ENCODE measurements at regions of chr6 and their contacts with region 1.

Region 1: DNA sequence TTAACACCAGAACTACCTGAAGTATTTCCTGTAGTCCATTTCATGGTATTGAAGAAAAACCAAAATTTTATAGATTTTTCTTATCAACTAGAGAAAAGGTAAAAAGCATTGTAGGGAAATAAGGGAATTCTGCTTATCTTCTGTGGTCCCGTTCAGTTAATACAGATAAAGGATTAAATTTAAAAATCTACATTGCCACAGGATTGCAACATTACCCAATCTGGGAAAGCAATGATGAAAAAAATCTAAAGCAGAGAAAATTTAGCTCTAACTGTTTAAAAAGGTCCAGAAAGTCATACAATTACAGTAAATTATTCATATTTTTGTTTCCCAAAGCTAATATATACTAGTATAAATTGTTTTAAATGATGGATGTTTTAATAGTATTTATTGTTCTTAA is 18.0 kb downstream of the POLH start:
- DNase-seq: no peak
- ATAC-seq: no peak
- H3K4me3 ChIP-seq: no peak overlapping the region
- H3K27ac ChIP-seq: no peak overlapping the region
- H3K4me1 ChIP-seq: no peaks in the 10 kb centered on the region
- H3K27me3 ChIP-seq: no peaks in the 10 kb centered on the region
- CTCF ChIP-seq: no peak

Region 2: GRCh38 chr6:43570876-43571441 is 23.0 kb before region 1 on chr6:
- intact Hi-C with region 1: loop called in 1 of 10 experiments (anchors 2 kb)
- DNase-seq: no peak
- ATAC-seq: no peak
- H3K4me3 ChIP-seq: no peak overlapping the region
- H3K27ac ChIP-seq: no peak overlapping the region
- H3K4me1 ChIP-seq: peaks cover 0 to 13% (median 8%) of the 10 kb centered on the region in 9 donors
- H3K27me3 ChIP-seq: no peaks in the 10 kb centered on the region
- CTCF ChIP-seq: no peak

Region 3: GRCh38 chr6:43798688-43799444 is 204.9 kb after region 1 on chr6:
- intact Hi-C with region 1: no loop called
- DNase-seq: peak; percentile 56 to 73
- ATAC-seq: peak; percentile 75 to 92 (median 88)
- H3K4me3 ChIP-seq: no peak overlapping the region
- H3K27ac ChIP-seq: peak overlapping the region in 9 of 10 donors; percentile 44 to 83 (median 72)
- H3K4me1 ChIP-seq: peaks cover 0 to 71% (median 20%) of the 10 kb centered on the region in 9 donors
- H3K27me3 ChIP-seq: no peaks in the 10 kb centered on the region
- CTCF ChIP-seq: no peak

Measured in heart right ventricle (tissue), 16 donors.